Dorsolateral prefrontal cortex (tissue), 120 donors: ENCODE measurements at regions of chr2 and their contacts with region 1.

Region 1: GRCh38 chr2:64453770-64454385 is at the start of gene LGALSL:
- DNase-seq: peak; percentile 34 to 85 (median 56)
- H3K4me3 ChIP-seq: peak within 1 kb of the TSS; percentile 62 to 90 (median 83)
- H3K27ac ChIP-seq: peak within 1 kb of the TSS; percentile 60 to 98 (median 93)
- H3K27me3 ChIP-seq: no peaks in the 10 kb centered on the region
- CTCF ChIP-seq: no peak
- total RNA-seq, gene LGALSL: 10.5 to 37.8 (median 21.0) TPM

Region 2: GRCh38 chr2:64523666-64524603 is 70.1 kb after region 1 on chr2 and contains the start of gene AFTPH:
- intact Hi-C with region 1: loop called (anchors 1 to 5 kb)
- DNase-seq: peak; percentile 97 to 99 (median 98)
- H3K4me3 ChIP-seq: peak within 1 kb of the TSS; percentile 64 to 99 (median 92)
- H3K27ac ChIP-seq: peak within 1 kb of the TSS; percentile 79 to 98 (median 94)
- H3K27me3 ChIP-seq: no peaks in the 10 kb centered on the region
- CTCF ChIP-seq: peak in 42 of 56 donors; percentile 5 to 61 (median 30)
- total RNA-seq, gene AFTPH: 26.7 to 61.2 (median 44.9) TPM